ENCODE measurements at regions of chr19 and their contacts with region 1.

Region 1: GRCh38 chr19:34894780-34895179 is 31.9 kb upstream of the ZNF30 start:
- DNase-seq: no peak
- H3K4me3 Mint-ChIP-seq: no peak overlapping the region
- H3K27ac Mint-ChIP-seq: no peak overlapping the region
- H3K4me1 Mint-ChIP-seq: no peaks in the 10 kb centered on the region
- H3K27me3 Mint-ChIP-seq: peaks cover 25% of the 10 kb centered on the region
- CTCF ChIP-seq: no peak

Region 2: DNA sequence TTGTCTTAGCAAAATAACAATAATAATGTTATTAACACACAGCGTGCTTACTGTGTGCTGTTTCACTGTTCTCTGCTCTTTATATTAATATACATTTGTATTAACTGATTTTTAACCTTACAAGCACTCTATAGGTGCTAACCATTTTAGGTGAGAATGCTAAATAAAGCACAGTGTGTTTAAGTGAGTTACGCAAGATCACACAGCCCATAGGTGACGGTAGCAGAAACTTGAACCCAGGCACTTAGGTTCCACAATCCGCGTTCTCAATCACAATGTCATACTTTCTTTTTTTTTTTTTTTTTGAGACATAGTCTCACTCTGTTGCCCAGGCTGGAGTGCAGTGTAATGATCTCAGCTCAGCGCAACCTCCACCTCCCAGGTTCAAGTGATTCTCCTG is 37.7 kb after region 1 on chr19:
- CTCF ChIA-PET with region 1: no interaction called
- intact Hi-C with region 1: loop called (anchors 1 kb)
- DNase-seq: no peak
- H3K4me3 Mint-ChIP-seq: no peak overlapping the region
- H3K27ac Mint-ChIP-seq: no peak overlapping the region
- H3K4me1 Mint-ChIP-seq: no peaks in the 10 kb centered on the region
- H3K27me3 Mint-ChIP-seq: no peaks in the 10 kb centered on the region
- CTCF ChIP-seq: no peak